ENCODE measurements at regions of chr2 and their contacts with region 1.

Region 1: GRCh38 chr2:135797497-135798274 is 39.3 kb downstream of the LCT start:
- DNase-seq: peak; percentile 54
- ATAC-seq: peak; percentile 95
- H3K4me3 ChIP-seq: no peak overlapping the region
- H3K27ac ChIP-seq: no peak overlapping the region
- H3K4me1 ChIP-seq: peaks cover 0 to 3% of the 10 kb centered on the region in 2 experiments; a peak in 1 of 4 replicates
- H3K27me3 ChIP-seq: no peaks in the 10 kb centered on the region
- CTCF ChIP-seq: peak; percentile 60 to 98 (median 96)
- POLR2A ChIP-seq: no peak
- RAD21 ChIP-seq: peak; percentile 71

Region 2: DNA sequence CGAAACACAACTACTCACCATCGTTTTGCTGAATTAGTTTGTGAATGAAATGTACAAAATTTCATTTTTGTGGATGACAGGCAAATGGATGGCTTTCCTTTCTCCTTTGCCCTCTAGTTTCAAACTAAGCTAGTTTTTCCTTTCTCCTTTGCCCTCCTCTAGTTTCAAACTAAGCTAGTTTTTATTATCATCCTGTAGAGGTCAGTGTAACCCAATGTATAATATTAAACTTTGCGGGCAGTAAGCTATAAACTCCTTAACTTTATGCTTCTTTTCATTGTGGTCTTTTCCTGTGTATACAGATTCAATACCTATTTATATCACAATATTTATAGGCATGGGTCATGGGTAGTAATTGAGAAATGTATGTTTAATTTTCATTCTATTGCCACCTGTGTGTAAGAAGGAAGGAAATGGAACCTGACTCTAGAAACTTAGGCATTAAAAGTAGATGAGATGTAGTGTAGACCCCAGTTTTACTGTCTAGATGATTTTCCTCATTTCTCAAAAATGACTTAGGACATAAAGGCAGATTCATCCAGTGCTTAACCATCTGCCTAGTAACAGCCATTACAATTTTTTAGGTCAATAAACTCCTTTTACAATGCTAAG is 808.6 kb before region 1 on chr2:
- CTCF ChIA-PET with region 1: interaction called, 30 read pairs
- POLR2A ChIA-PET with region 1: no interaction called
- RAD21 ChIA-PET with region 1: no interaction called
- intact Hi-C with region 1: no loop called
- DNase-seq: peak; percentile 18
- ATAC-seq: peak; percentile 85
- H3K4me3 ChIP-seq: no peak overlapping the region
- H3K27ac ChIP-seq: no peak overlapping the region
- H3K4me1 ChIP-seq: no peaks in the 10 kb centered on the region
- H3K27me3 ChIP-seq: peaks cover 21% of the 10 kb centered on the region; the same call in 1 of the 2 replicates
- CTCF ChIP-seq: peak; percentile 31 to 65 (median 45); a peak in 4 of 6 replicates
- POLR2A ChIP-seq: no peak
- RAD21 ChIP-seq: peak; percentile 71

Region 3: GRCh38 chr2:135785032-135785431 is 12.7 kb before region 1 on chr2:
- CTCF ChIA-PET with region 1: interaction called, 22 read pairs
- POLR2A ChIA-PET with region 1: interaction called, 3 read pairs
- RAD21 ChIA-PET with region 1: no interaction called
- intact Hi-C with region 1: no loop called
- DNase-seq: no peak
- ATAC-seq: peak; percentile 57
- H3K4me3 ChIP-seq: no peak overlapping the region
- H3K27ac ChIP-seq: no peak overlapping the region
- H3K4me1 ChIP-seq: peaks cover 6 to 14% of the 10 kb centered on the region in 2 experiments; a peak in 3 of 4 replicates
- H3K27me3 ChIP-seq: no peaks in the 10 kb centered on the region
- CTCF ChIP-seq: peak in 2 of 3 experiments; percentile 28 to 46; a peak in 4 of 6 replicates
- POLR2A ChIP-seq: no peak
- RAD21 ChIP-seq: no peak

Region 4: DNA sequence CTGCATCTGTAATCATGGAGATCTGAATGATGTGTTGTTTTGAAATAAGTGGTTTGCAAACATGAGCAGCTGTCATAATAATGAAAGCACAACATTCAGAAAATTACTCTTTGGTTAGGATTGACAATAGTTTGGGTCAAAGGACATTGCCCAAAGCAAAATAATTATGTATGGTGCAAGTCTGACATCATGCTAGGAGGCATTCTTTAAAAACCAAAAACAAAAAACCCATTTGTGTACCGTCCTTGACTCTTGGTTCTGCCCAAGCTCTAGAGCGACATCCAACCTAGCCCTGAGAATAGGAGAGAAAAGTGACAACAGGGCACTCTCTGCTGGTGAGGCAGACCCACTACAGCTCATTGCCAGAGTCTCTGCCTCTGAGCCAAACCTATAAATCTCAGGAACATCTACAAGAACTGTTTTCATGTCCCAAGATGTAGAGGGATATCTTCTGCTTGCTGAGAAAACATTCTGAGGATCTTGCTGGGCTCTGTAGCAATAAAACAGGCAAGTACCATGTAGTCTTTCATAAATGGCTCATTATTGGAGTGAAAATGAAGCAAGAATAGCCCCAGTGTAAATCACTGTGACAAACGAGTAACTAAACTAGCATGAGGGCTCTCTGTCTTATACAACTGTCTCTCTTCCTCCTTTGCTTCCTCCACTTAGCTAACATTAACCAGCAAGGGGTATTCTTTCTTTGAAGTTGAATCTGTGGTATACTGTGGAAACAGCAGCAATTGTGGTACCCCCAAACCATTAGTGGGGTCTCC is 587.0 kb after region 1 on chr2:
- CTCF ChIA-PET with region 1: interaction called, 11 read pairs
- POLR2A ChIA-PET with region 1: no interaction called
- RAD21 ChIA-PET with region 1: no interaction called
- intact Hi-C with region 1: no loop called
- DNase-seq: peak; percentile 39
- ATAC-seq: peak; percentile 99
- H3K4me3 ChIP-seq: no peak overlapping the region
- H3K27ac ChIP-seq: no peak overlapping the region
- H3K4me1 ChIP-seq: no peaks in the 10 kb centered on the region
- H3K27me3 ChIP-seq: peaks cover 16% of the 10 kb centered on the region; the same call in 1 of the 2 replicates
- CTCF ChIP-seq: peak; percentile 68 to 76 (median 69)
- POLR2A ChIP-seq: no peak
- RAD21 ChIP-seq: peak; percentile 89

Measured in HCT116 (cell line).